MCF 10A (cell line): ENCODE measurements at regions of chr10 and their contacts with region 1.

Region 1: GRCh38 chr10:35563261-35563891 is 41.8 kb upstream of the GJD4 start:
- DNase-seq: peak; percentile 79
- H3K4me3 Mint-ChIP-seq: no peak overlapping the region
- H3K27ac Mint-ChIP-seq: no peak overlapping the region
- H3K4me1 Mint-ChIP-seq: no peaks in the 10 kb centered on the region
- H3K27me3 Mint-ChIP-seq: no peaks in the 10 kb centered on the region
- CTCF ChIP-seq: peak; percentile 97

Region 2: DNA sequence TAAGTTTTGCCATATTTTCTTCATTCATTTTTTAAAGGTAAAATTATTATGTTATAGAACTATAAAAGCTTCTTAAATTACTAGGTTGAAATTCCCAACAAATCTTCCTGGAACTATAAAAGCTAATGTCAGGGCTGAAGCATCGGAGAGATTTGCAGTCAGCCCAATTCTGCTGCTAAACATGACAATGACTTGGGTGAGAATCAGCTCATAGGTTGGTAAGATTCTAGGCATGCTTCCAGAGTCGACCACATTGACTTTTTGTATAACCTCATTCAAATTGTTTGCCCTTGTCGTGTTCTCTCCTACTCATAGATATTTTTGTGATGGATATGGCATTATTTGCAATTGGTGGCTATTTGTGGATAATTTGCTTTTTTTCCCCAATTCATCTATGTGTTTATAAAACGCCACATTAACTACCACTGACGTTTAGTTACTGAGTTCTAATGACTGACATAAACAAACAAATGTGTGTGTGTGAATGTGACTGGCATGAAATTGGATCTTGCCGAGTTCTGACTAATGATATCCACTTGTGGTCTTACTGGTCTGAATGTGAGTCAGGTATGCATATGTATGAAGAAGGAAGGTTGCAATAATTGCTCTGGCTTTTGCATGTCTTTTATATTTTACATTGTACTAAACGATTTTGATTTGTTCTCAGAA is 1328.1 kb before region 1 on chr10:
- CTCF ChIA-PET with region 1: no interaction called
- POLR2A ChIA-PET with region 1: no interaction called
- intact Hi-C with region 1: no loop called
- DNase-seq: peak; percentile 72
- H3K4me3 Mint-ChIP-seq: no peak overlapping the region
- H3K27ac Mint-ChIP-seq: no peak overlapping the region
- H3K4me1 Mint-ChIP-seq: no peaks in the 10 kb centered on the region
- H3K27me3 Mint-ChIP-seq: no peaks in the 10 kb centered on the region
- CTCF ChIP-seq: no peak

Region 3: GRCh38 chr10:35126530-35127296 is 436.7 kb before region 1 on chr10 and contains the start of gene CREM:
- CTCF ChIA-PET with region 1: no interaction called
- POLR2A ChIA-PET with region 1: no interaction called
- intact Hi-C with region 1: loop called (anchors 10 kb)
- DNase-seq: peak; percentile 98
- H3K4me3 Mint-ChIP-seq: peak within 1 kb of the TSS; percentile 82
- H3K27ac Mint-ChIP-seq: peak within 1 kb of the TSS; percentile 97
- H3K4me1 Mint-ChIP-seq: peaks cover 6% of the 10 kb centered on the region
- H3K27me3 Mint-ChIP-seq: no peaks in the 10 kb centered on the region
- CTCF ChIP-seq: peak; percentile 86
- total RNA-seq, gene CREM: 30.2 and 31.3 TPM in 2 replicates

Region 4: DNA sequence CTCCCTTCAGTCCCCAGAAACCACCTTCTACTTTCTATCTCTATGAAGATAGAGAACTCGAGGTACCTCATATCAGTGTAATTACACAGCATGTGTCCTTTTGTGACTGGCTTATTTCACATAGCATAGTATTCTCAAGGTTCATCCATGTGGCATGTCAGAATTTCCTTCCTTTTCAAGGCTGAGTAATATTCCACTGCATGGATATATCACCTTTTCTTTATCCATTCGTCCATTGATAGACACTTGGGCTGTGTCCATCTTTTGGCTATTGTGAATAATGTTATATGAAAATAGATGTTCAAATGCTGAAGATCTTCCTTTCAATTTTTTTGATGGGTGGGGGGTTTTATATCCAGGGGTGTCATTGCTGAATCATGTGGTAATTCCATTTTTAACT is 318.8 kb before region 1 on chr10:
- CTCF ChIA-PET with region 1: interaction called, 4 read pairs
- POLR2A ChIA-PET with region 1: no interaction called
- intact Hi-C with region 1: loop called (anchors 5 kb)
- DNase-seq: no peak
- H3K4me3 Mint-ChIP-seq: no peak overlapping the region
- H3K27ac Mint-ChIP-seq: no peak overlapping the region
- H3K4me1 Mint-ChIP-seq: no peaks in the 10 kb centered on the region
- H3K27me3 Mint-ChIP-seq: no peaks in the 10 kb centered on the region
- CTCF ChIP-seq: no peak

Region 5: GRCh38 chr10:35546824-35547273 is 16.5 kb before region 1 on chr10:
- CTCF ChIA-PET with region 1: interaction called, 10 read pairs
- POLR2A ChIA-PET with region 1: interaction called, 4 read pairs
- intact Hi-C with region 1: no loop called
- DNase-seq: peak; percentile 87
- H3K4me3 Mint-ChIP-seq: peak overlapping the region; percentile 50
- H3K27ac Mint-ChIP-seq: peak overlapping the region; percentile 90
- H3K4me1 Mint-ChIP-seq: peaks cover 26% of the 10 kb centered on the region
- H3K27me3 Mint-ChIP-seq: no peaks in the 10 kb centered on the region
- CTCF ChIP-seq: peak; percentile 15

Region 6: DNA sequence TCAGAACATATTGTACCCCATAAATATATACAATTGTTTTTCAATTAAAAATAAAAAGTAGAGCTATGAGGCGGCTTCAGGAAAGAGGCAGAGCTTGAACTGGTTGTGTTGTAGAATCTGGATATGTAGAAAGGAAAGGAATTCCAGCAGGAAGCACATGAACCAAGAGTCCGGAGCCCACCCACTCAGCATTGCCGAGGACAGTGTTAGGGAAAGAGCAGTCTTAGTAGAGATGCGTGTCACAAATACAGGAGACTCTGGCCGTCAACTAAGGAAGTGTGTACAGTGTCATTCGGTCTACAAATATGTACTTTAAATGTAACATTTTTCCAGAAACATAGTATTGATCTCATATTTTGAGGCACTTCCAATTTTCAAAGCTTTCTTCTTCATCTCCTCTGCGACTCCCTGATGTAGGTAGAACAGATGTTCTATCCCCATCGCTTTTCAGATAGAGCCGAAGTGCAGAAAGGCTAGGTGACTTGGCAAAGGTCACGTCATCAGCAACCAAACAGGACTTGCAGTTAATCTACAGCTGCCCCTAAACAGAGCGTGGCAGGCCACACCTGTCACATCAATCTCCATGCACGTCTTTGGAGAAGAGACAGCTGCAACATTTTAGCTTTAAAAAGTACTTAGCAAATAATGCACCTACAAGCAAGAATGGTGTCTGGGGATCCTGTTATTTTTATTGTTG is 16.5 kb after region 1 on chr10:
- CTCF ChIA-PET with region 1: interaction called, 10 read pairs
- POLR2A ChIA-PET with region 1: interaction called, 3 read pairs
- intact Hi-C with region 1: no loop called
- DNase-seq: no peak
- H3K4me3 Mint-ChIP-seq: no peak overlapping the region
- H3K27ac Mint-ChIP-seq: no peak overlapping the region
- H3K4me1 Mint-ChIP-seq: no peaks in the 10 kb centered on the region
- H3K27me3 Mint-ChIP-seq: no peaks in the 10 kb centered on the region
- CTCF ChIP-seq: no peak